ENCODE measurements at regions of chr11 and their contacts with region 1.

Region 1: DNA sequence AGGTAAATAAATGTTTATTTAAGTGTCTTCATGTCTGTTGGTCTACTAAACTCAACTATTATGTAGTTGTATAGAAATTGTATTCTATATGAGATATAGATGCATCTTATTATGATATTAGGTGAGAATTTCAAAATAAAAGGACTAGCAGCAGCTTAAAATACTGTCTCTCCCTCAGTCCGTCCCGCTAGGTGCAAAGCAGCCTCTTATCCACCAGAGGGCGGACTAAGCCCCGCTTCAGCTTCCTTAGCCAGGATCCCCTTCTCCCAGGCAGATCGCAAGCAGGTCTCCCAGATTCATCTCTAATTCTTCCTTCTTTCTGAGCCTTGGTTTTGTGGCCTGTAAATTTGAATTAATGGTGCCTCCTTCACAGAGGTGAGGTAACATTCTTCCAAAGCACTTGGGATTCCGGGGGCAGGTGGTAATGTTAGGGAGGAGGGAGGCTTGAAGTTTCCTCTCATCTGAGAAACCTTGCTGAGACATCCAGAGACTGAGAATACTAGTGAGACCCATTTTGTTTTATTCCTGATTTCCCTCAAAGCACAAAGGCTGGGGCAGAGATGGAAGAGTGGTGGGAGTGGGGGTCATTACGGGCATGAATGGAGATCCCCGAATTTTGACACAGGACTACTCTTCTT is 13.5 kb upstream of the INSC start:
- DNase-seq: peak; percentile 87
- H3K4me3 Mint-ChIP-seq: no peak overlapping the region
- H3K27ac Mint-ChIP-seq: no peak overlapping the region
- H3K4me1 Mint-ChIP-seq: peaks cover 4% of the 10 kb centered on the region
- H3K27me3 Mint-ChIP-seq: peaks cover 39% of the 10 kb centered on the region

Region 2: DNA sequence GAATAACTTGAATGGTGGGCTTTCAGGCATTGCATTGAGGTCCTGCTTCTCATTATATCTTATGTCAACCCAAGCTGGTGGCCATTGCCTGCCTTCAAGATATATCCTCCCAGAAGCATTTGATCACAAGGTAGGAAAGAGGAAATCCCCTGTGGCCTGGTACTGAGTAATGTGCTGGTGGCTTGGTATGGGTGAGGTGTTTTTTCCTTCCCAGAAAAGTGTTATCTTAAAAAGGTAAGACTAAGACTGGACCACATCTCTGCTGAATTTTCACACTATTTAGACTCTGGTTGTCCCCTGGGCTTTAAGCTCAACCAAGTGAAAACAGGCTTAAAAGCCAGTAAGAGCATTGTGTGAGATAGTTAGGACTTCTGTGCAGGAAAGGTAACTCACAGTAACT is 17.2 kb after region 1 on chr11:
- intact Hi-C with region 1: loop called (anchors 1 kb)
- DNase-seq: peak; percentile 81
- H3K4me3 Mint-ChIP-seq: no peak overlapping the region
- H3K27ac Mint-ChIP-seq: peak overlapping the region; percentile 81
- H3K4me1 Mint-ChIP-seq: peaks cover 36% of the 10 kb centered on the region
- H3K27me3 Mint-ChIP-seq: peaks cover 35% of the 10 kb centered on the region

Region 3: GRCh38 chr11:15159085-15159484 is 57.9 kb after region 1 on chr11:
- intact Hi-C with region 1: loop called (anchors 1 kb)
- DNase-seq: peak; percentile 61
- H3K4me3 Mint-ChIP-seq: no peak overlapping the region
- H3K27ac Mint-ChIP-seq: no peak overlapping the region
- H3K4me1 Mint-ChIP-seq: no peaks in the 10 kb centered on the region
- H3K27me3 Mint-ChIP-seq: peaks cover 21% of the 10 kb centered on the region

Region 4: DNA sequence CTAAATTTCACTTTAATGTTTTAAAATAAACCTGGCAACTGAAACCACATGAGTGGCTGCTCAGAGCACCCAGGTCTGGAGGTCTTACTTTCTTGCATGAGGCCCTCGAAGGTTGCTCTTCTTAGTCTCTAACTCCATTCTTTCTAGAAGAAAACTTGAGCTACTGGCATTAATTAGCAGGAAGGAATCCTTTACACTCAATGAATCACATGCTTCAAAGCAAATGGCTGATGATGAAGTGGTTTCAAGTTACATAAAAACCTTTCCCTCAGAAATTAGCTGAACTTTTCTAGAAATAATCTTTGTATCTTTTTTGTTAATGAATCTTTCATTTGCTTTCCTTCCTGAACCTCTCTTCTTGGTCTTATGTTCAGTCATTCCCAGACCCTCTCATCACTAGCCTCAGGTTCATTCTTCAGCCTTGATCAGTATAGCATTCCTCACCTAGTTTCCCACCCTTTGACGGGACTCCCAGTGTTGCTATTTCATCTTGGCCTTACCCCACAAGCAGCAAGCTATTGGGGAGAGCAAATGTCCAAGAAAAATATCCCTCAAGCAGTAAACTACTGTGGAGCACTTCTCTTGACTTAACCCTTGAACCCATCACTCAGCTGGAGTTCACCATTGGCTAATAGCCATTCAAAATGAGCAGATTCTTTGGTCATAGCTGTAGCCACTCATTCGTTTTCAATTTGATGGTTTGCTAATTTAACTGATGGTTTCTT is 88.6 kb after region 1 on chr11:
- intact Hi-C with region 1: no loop called
- DNase-seq: no peak
- H3K4me3 Mint-ChIP-seq: no peak overlapping the region
- H3K27ac Mint-ChIP-seq: no peak overlapping the region
- H3K4me1 Mint-ChIP-seq: no peaks in the 10 kb centered on the region
- H3K27me3 Mint-ChIP-seq: peaks cover 10% of the 10 kb centered on the region

Region 5: GRCh38 chr11:15208378-15209222 is 107.4 kb after region 1 on chr11:
- intact Hi-C with region 1: loop called (anchors 1 kb)
- DNase-seq: peak; percentile 93
- H3K4me3 Mint-ChIP-seq: no peak overlapping the region
- H3K27ac Mint-ChIP-seq: no peak overlapping the region
- H3K4me1 Mint-ChIP-seq: no peaks in the 10 kb centered on the region
- H3K27me3 Mint-ChIP-seq: peaks cover 11% of the 10 kb centered on the region

Measured in activated CD4-positive, alpha-beta T cell treated with anti-CD3 and anti-CD28 coated beads, Interleukin-2, amount 10 ng/mL, durations not matched to agents 24 days and 14 days (primary cell).